H1 (cell line): ENCODE measurements at regions of chr5 and their contacts with region 1.

Region 1: GRCh38 chr5:112149727-112150126 is 269.4 kb downstream of the EPB41L4A start:
- DNase-seq: no peak
- H3K4me3 ChIP-seq: no peak overlapping the region
- H3K27ac ChIP-seq: no peak overlapping the region
- H3K4me1 ChIP-seq: no peaks in the 10 kb centered on the region
- H3K27me3 ChIP-seq: no peaks in the 10 kb centered on the region
- CTCF ChIP-seq: no peak
- EP300 ChIP-seq: no peak
- POLR2A ChIP-seq: no peak
- RAD21 ChIP-seq: no peak

Region 2: DNA sequence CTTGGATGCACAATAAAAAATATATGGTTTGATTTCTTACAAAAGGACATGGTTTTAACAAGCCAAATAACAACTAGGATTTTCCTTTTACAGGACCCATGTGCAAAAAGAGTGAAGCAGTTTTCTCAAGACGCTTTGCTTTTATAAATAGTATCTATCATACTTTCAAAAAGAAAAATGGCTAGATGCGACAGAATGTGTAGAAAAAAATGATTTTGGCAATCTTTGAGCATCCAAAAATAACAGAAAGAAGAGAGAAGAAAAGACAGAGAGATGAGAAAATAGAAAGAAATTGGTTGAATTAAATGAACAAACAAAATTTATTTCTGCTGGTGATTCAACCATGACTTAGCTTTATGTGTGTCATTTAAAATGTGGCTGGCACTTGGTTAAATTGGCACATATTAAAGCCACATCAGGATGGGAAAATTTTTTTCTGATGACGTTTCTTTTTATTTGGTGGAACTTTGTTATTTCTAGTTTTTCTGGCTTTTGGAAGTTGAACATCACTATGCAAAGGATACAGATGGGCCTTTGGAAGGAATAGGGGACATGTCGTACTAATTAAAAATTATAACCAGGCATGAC is 357.2 kb before region 1 on chr5:
- CTCF ChIA-PET with region 1: no interaction called
- POLR2A ChIA-PET with region 1: no interaction called
- DNase-seq: no peak
- H3K4me3 ChIP-seq: no peak overlapping the region
- H3K27ac ChIP-seq: no peak overlapping the region
- H3K4me1 ChIP-seq: no peaks in the 10 kb centered on the region
- H3K27me3 ChIP-seq: no peaks in the 10 kb centered on the region
- CTCF ChIP-seq: no peak
- EP300 ChIP-seq: no peak
- POLR2A ChIP-seq: no peak
- RAD21 ChIP-seq: no peak

Region 3: DNA sequence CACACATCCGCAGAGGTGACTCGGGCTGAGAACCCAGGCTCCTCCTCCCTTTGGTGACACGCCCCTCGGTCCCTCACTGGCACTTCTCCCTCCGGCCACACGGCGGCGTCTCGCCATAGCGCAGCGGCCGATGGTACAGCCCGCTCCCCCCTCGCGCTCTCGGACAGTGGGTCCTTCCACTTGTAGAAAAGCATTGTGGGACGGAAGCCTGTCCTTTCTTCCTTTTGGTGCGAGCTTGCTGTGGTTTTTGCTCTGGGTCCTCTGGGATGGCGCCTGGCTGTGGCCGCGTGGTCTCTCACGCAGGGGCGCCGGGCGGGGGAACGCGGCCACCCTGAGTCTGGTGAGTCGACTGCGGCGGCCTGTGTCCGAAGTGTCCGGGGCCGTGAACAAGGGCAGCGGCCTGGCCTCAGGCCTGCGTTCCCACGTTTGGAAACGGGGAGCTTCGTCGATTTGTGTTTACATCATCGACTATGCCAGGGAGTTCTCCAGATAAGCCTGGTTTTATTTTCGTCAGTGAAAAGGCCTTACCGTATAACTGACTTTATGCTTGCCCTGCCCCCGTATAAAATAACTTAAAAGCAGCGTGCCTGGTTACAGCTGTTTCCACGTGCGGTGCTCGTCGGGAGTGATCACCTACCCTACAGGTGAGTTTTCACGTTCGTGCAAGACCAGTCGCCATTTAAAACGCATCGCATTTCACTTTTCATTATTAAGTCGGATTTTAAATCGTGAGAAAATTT is 11.1 kb after region 1 on chr5:
- CTCF ChIA-PET with region 1: interaction called, 3 read pairs
- POLR2A ChIA-PET with region 1: interaction called, 21 read pairs
- DNase-seq: peak; percentile 70 to 98
- H3K4me3 ChIP-seq: peak overlapping the region; percentile 86 to 99 (median 96)
- H3K27ac ChIP-seq: peak overlapping the region; percentile 91
- H3K4me1 ChIP-seq: peaks cover 3 to 10% (median 3%) of the 10 kb centered on the region in 4 experiments; a peak in 4 of 7 replicates
- H3K27me3 ChIP-seq: no peaks in the 10 kb centered on the region
- CTCF ChIP-seq: peak; percentile 94 to 100 (median 100)
- EP300 ChIP-seq: peak in 1 of 2 experiments; percentile 100; a peak in 2 of 3 replicates
- POLR2A ChIP-seq: peak; percentile 97 to 99
- RAD21 ChIP-seq: peak; percentile 41 to 53